Naive thymus-derived CD4-positive, alpha-beta T cell (primary cell): ENCODE measurements at regions of chr12 and their contacts with region 1.

Region 1: DNA sequence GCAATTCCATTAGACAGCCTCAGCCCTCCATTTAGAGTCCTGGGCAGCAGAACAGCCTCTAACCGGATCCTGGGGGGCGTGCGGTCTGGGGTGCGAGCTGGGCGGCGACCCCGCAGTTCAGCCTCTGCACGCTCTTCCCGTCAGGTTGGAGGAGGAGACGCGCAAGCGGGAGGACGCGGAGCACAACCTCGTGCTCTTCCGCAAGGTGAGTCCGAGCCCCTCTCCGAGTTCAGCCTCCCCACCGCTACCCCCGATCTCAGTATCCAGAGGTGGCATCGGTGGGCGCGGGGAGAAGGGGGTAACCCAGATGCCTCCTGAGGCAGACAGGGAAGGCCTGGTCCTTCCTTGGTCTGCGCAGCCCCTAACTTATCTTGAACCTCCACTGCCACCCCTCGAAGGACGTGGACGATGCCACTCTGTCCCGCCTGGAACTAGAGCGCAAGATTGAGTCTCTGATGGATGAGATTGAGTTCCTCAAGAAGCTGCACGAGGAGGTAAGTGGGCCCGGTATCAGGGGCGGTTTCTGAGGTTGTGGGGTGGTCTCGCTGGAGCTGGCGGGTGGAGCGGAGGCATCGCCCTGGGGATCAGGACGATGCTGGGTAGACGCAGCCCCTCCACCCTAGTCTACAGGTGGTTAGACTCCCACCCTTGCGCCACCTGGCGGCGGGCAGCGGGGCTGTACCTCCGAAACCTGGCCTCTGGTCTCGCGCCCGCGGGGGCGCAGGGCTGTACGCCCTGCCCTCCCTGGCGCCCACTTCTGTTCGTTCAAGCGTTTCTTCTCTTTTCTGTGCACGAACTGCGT is 1.3 kb downstream of the PRPH start:
- DNase-seq: peak; percentile 37 to 75 (median 58)
- ATAC-seq: peak; percentile 82
- H3K4me3 ChIP-seq: peak overlapping the region; percentile 36
- H3K4me3 Mint-ChIP-seq: peak overlapping the region; percentile 57 to 83 (median 74)
- H3K27ac ChIP-seq: no peak overlapping the region
- H3K27ac Mint-ChIP-seq: no peak overlapping the region
- H3K4me1 ChIP-seq: peaks cover 10 to 11% of the 10 kb centered on the region in 2 donors
- H3K4me1 Mint-ChIP-seq: peaks cover 7 to 27% (median 21%) of the 10 kb centered on the region in 7 donors
- H3K27me3 ChIP-seq: peaks cover 0 to 28% of the 10 kb centered on the region in 2 donors
- H3K27me3 Mint-ChIP-seq: peaks cover 38 to 68% (median 46%) of the 10 kb centered on the region in 5 donors

Region 2: DNA sequence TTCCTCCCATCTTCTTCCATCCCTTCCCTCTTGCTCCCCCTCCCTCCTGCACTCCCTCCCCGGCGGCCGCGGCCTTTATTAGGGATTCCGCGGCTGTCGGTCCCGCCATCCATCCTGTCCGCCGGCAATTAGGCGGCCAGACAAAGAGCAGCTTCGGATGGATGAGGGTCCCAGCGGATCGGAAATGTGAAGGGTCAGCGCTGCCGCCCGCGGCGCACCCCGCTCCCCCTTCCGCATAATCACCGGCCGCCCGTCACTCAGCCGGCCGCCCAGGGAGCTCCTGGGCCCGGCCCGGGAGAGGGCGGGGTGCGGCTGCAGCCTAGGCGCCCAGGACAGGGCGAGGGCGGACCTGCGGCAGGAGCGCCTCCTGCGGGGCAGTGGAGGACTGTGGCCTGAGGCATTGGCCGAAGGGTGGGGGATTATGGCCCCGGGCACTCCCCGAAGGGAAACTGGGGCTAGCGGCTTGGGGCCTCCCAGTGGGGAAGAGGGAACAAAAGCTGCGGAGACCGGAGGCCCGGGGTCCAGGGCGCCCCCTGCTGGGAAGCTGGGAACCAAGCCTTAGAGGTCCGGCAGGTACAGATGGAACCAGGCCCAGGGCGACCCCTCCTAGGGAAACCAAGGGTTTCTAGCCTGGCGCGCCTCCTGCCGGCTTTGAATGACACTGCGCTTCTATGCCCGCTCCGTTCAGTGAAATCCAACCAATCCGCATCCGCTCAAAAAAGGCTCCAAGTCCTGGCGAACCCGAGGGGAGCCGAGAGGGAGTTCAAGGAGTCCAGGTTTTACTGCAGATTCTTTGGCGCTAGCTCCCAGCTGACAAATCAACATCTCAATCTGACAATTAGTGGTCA is 46.1 kb after region 1 on chr12:
- CTCF ChIA-PET with region 1: interaction called, 26 read pairs
- POLR2A ChIA-PET with region 1: no interaction called
- intact Hi-C with region 1: loop called in 1 of 2 experiments (anchors 2 kb)
- DNase-seq: peak; percentile 30 to 83 (median 61)
- ATAC-seq: peak; percentile 82
- H3K4me3 ChIP-seq: peak overlapping the region; percentile 43
- H3K4me3 Mint-ChIP-seq: peak overlapping the region; percentile 61 to 92 (median 76)
- H3K27ac ChIP-seq: no peak overlapping the region
- H3K27ac Mint-ChIP-seq: no peak overlapping the region
- H3K4me1 ChIP-seq: peaks cover 37 to 46% of the 10 kb centered on the region in 2 donors
- H3K4me1 Mint-ChIP-seq: peaks cover 19 to 59% (median 46%) of the 10 kb centered on the region in 7 donors
- H3K27me3 ChIP-seq: peaks cover 9 to 27% of the 10 kb centered on the region in 2 donors
- H3K27me3 Mint-ChIP-seq: peaks cover 58 to 93% (median 67%) of the 10 kb centered on the region in 5 donors